ENCODE measurements at regions of chr11 and their contacts with region 1.

Region 1: DNA sequence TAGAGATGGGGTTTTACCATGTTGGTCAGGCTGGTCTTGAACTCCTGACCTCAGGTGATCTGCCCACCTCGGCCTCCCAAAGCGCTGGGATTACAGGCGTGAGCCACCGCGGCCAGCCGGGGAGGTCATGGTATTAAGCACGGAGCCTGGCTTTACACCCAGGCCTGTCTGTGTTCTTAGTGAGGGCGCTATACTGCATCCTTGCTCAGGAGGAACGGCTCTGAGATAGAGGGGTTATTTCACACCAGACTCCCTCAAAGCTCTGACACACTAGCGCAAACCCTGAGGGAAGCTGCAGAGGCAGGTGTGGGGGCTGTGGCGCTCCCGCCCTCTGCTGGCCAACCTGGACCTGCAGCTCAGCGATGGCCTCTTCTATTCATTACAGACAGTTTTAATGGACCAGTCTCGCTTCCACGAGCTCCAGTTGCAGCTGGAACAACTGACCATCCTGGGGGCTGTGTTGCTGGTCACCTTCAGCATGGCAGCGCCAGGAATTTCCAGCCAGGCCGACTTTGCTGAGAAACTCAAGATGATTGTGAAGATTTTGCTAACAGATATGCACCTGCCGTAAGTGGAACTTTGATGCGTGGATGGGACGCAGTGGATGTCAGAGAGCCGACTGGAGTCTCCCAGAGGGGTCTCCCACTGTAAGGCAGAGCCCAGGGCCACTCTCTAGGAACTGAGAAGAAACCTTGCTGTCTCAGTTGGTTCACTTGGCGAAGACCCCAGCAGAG is 26.2 kb downstream of the TCP11L1 start:
- DNase-seq: peak; percentile 91

Region 2: DNA sequence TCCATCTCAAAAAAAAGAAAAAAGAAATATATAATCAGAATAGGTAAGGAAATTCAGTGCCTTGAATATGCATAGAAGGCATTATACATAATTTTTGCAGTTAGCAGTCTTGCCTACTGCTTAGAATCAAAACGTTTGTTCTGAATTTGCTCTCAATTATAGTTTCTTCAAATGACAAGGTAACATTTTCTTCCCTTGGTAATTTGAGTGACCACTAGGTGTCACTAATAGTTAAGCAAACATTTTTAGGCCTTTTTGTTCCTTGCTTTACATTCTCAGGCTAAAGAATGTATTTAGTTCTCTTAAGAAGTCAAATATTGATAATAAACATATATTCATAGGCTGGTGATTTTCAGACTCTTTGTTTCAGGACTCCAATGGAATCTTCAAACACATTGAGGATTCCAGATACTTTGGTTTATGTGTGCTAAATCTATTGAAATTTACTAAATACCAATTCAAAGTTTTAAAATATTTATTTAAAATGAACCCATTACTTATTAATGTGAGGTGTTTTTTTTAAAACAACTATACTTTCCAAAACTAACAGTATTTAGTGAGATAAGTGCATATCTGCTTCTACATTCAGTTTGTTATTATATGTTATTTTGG is 105.0 kb before region 1 on chr11:
- intact Hi-C with region 1: loop called (anchors 5 kb)
- DNase-seq: no peak

Region 3: GRCh38 chr11:33018840-33019239 is 46.8 kb before region 1 on chr11:
- intact Hi-C with region 1: loop called in 1 of 2 experiments (anchors 1 kb)
- DNase-seq: no peak

Region 4: DNA sequence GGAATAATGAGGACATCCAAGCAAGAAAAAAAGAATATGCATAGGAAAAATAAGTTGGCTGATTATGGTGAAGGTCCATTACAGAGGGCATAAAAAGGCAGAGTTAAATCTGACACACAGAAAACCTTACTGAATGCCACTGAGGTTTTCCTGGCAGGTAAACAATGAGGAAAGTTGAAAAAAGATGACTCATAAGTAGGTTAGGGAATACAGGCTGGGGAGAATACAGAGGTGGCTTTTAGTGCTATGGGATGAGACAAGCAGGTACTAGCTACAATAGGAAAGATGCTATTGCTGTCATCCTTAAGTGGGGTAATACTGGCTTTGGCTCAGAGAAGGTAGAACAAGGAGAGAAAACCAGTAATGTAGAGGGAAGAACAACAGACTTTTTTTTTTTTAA is 50.9 kb after region 1 on chr11:
- intact Hi-C with region 1: no loop called
- DNase-seq: no peak

Measured in posterior vena cava (tissue), 2 donors.